Spleen (tissue), 13 donors: ENCODE measurements at regions of chr5 and their contacts with region 1.

Region 1: DNA sequence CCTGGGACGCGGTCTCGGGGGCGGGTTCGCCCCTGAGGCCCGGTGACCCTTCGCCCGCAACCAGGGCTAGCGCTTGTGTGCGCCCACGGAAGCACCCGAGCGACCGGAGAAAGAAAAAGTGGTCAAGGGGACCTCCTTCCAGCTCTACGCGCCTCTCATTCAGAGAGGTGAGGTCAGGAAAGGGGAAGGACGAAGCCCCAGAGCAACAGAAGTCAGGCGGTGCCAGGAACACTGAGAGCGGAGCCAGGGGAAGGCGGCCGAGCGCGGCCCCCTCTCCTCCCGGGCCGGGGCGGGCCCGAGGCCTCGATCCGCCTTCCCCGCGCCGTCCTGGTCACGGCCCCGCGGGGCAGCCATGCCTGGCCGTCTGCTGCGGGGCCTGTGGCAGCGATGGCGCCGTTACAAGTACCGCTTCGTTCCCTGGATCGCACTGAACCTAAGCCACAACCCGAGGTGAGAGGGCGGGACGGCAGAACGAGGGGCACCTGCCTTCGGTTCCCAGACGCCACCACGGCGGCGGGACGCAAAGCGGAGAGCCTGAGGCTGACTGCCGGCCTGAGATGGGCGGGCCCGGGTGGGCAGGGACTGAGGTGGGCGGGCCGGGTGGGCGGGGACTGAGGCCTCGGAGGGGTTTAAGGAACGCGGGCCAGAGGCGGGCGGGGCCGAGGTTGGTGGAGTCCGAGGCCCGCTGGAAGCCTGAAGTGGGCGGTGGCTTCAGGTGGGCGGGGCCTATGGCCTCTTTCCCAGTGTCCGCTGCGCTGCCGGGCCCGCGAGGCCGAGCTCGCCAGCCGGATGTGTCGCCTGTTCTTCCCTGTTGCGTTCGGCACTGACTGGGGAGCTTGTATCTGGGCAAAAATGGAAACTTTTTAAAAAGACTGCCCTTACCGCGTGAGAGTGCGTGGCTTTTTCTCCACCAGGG is at the start of gene SETD9:
- DNase-seq: peak; percentile 100
- H3K4me3 ChIP-seq: peak within 1 kb of the TSS; percentile 44 to 83 (median 65)
- H3K27ac ChIP-seq: peak within 1 kb of the TSS; percentile 89 to 98 (median 96)
- H3K4me1 ChIP-seq: peaks cover 8 to 24% (median 19%) of the 10 kb centered on the region in 6 donors
- H3K27me3 ChIP-seq: no peaks in the 10 kb centered on the region
- CTCF ChIP-seq: peak in 2 of 11 experiments; percentile 26 to 30
- POLR2A ChIP-seq: peak; percentile 21 to 59 (median 57)
- total RNA-seq, gene SETD9: 5.6 to 6.2 (median 6.1) TPM

Region 2: DNA sequence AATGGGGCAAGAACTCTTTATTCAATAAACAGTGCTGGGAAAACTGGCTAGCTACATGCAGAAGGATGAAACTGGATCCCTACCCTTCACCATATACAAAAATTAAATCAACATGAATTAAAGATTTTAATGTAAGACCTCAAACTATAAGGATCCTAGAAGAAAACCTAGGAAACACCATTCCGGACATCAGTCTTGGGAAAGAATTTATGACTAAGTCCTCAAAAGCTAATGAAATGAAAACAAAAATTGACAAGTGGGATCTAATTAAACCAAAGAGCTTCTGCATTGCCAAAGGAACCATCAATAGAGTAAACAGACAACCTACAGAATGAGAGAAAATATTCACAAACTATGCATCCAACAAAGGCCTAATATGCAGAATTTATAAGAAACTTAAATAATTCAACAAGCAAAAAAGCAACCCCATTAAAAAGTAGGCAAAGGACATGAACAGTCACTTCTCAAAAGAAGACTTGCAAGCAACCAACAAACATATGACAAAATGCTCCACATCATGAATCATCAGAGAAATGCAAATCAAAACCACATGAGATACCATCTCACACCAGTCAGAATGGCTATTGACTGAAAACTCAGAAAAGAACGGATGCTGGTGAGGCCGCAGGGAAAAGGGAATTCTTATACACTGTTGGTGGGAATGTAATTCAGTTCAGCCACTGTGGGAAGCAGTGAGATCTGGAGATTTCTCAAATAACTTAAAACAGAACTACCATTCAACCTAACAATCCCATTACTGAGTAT is 198.5 kb before region 1 on chr5:
- intact Hi-C with region 1: no loop called
- DNase-seq: no peak
- H3K4me3 ChIP-seq: no peak overlapping the region
- H3K27ac ChIP-seq: no peak overlapping the region
- H3K4me1 ChIP-seq: peaks cover 0 to 10% (median 0%) of the 10 kb centered on the region in 6 donors
- H3K27me3 ChIP-seq: no peaks in the 10 kb centered on the region
- CTCF ChIP-seq: no peak
- POLR2A ChIP-seq: no peak

Region 3: DNA sequence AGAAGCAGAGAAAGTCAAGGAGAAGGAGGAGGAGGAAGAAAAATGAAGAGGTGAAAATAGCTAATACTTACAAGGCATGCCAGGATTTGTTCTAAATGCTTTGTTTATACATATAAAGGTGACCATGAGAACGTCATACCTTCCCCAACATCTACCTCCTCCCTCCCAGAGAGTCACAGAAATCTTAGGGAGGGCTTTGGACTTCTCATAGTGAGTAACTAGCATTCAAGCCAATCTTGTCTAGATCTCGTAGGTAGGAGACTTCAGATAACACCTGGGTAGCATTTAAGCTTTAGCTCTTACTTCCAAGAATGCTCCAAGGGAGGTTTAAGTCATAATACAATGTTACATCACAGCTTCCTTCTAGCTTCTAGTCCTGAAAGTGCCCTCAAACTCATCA is 227.8 kb after region 1 on chr5:
- intact Hi-C with region 1: loop called (anchors 10 kb)
- DNase-seq: no peak
- H3K4me3 ChIP-seq: no peak overlapping the region
- H3K27ac ChIP-seq: no peak overlapping the region
- H3K4me1 ChIP-seq: no peaks in the 10 kb centered on the region
- H3K27me3 ChIP-seq: peaks cover 0 to 8% (median 0%) of the 10 kb centered on the region in 7 donors
- CTCF ChIP-seq: no peak
- POLR2A ChIP-seq: no peak

Region 4: DNA sequence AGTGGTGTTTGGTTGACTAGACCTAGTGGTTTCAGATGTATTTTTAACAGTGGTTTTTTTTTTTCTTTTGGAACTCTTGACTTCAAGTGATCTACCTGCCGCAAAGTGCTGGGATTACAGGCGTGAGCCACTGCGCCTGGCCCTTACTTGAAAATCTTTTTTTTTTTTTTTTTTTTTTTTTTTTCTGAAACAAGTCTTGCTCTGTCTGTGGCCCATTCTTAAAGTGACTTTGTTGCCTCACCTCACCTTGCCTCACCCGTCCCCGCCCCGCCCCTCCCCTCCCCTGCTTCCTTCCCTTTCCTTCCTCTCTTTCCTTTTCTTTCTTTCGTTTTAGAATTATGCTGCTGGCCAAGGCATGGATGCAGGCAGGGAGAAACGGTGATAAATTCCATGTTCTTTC is 290.3 kb after region 1 on chr5:
- intact Hi-C with region 1: no loop called
- DNase-seq: no peak
- H3K4me3 ChIP-seq: no peak overlapping the region
- H3K27ac ChIP-seq: peak overlapping the region in 4 of 8 donors; percentile 7 to 67 (median 34)
- H3K4me1 ChIP-seq: peaks cover 10 to 100% (median 65%) of the 10 kb centered on the region in 6 donors
- H3K27me3 ChIP-seq: no peaks in the 10 kb centered on the region
- CTCF ChIP-seq: no peak
- POLR2A ChIP-seq: no peak